Cardiac septum (tissue), 1 donor: ENCODE measurements at regions of chr2 and their contacts with region 1.

Region 1: GRCh38 chr2:17538844-17539554 is 1.5 kb upstream of the VSNL1 start:
- DNase-seq: peak; percentile 76

Region 2: DNA sequence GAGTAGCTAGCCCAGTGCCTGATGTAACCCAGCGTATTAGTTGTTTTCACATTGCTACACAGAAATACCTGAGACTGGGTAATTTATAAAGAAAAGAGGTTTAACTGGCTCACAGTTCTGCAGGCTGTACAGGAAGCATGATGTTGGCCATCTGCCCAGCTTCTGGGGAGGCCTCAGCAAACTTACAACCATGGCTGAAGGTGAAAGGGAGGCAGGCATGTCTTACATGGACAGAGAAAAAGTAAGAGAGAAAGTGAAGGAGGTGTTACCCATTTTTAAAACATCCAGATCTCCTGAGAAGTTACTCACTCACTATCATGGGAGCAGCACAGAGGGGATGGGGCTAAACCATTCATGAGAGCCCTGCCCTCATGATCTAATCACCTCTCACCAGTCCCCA is 867.2 kb before region 1 on chr2:
- intact Hi-C with region 1: no loop called
- DNase-seq: no peak

Region 3: GRCh38 chr2:17518212-17519154 is 20.5 kb before region 1 on chr2 and contains the start of gene RAD51AP2:
- intact Hi-C with region 1: loop called (anchors 2 kb)
- DNase-seq: peak; percentile 89
- total RNA-seq, gene RAD51AP2: 0.43 TPM

Region 4: DNA sequence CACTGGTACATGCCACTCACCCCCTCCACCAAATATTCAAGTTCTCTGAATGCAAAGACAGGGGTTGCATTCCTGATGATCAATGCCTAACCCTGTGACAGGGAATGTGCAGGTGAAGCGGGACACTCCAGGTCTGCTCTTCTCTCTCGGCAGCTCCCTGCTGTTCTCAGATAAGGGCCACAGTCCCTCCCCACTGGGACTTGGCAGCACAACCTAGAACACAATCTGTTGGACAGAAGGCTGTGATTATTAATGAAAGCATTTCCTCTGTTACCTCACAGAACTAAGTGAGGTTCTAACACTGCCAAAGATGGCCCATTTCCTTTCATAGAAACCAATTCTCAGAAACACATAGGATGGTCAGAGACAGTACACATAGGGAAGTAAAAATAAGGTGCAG is 44.2 kb after region 1 on chr2:
- intact Hi-C with region 1: loop called (anchors 1 kb)
- DNase-seq: no peak

Region 5: DNA sequence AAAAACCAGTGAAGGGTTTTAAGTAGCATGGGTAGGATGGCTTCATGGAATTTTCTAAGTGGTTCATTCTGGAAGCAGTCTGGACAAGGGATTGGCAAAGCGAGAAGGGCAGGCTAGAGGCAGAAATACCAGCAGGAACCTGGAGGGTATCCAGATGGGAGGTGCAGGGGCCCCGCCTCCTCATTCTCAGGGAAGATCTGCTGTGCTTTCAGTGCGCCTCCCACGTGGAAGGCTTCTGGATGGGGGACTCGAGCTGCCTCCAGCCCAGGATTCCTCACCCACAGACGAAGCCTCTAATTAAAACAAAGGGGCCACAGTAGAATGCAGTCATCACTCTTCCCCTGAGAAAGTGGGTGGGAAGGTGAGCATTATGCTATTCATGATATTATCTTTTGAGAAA is 81.3 kb after region 1 on chr2:
- intact Hi-C with region 1: loop called (anchors 5 kb)
- DNase-seq: peak; percentile 83

Region 6: GRCh38 chr2:17644997-17645720 is 106.2 kb after region 1 on chr2:
- intact Hi-C with region 1: loop called (anchors 2 kb)
- DNase-seq: no peak

Region 7: GRCh38 chr2:17672583-17673317 is 133.8 kb after region 1 on chr2:
- intact Hi-C with region 1: no loop called
- DNase-seq: no peak

Region 8: GRCh38 chr2:18077704-18078103 is 538.7 kb after region 1 on chr2:
- intact Hi-C with region 1: no loop called
- DNase-seq: no peak